ENCODE measurements at regions of chr19 and their contacts with region 1.

Region 1: DNA sequence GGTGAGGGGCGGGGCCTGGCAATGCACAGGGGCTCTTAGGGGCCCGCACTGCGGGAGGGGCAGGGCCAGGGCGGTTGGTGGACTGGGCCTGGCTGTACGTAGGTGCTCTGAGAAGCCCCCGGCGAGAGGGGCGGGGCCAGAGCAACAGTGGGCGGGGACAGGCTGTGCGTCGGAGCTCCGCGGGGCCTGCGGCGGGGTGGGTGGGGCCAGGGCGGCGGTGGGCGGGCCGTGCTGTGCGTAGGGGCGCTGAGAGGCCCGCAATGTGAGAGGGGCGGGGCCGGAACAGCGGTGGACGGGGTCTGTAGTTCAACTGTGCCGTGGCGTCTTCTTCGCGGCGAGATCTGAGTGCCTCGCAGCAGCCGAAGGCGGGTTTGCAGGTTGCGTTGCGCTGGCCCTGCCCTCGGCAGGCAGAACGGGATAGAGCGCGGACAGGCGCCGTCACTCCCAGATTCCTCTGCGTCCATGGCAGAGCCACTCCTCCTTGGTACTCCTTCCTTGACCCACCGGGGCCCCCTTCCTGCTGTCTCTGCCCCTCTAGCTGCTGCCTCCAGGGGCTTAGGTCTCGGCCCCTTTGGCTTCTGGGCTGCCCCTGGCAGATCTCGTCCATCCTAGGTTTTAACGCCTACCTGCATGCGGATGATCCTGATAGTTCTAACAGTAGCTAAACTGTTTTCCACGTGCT is 33.2 kb downstream of the CCNE1 start:
- DNase-seq: peak; percentile 94 to 99 (median 96)
- ATAC-seq: peak; percentile 80
- H3K4me3 ChIP-seq: peak overlapping the region; percentile 99
- H3K4me3 Mint-ChIP-seq: peak overlapping the region; percentile 95
- H3K27ac ChIP-seq: peak overlapping the region; percentile 76
- H3K27ac Mint-ChIP-seq: peak overlapping the region; percentile 93
- H3K4me1 ChIP-seq: peaks cover 24% of the 10 kb centered on the region
- H3K4me1 Mint-ChIP-seq: peaks cover 22% of the 10 kb centered on the region
- H3K27me3 ChIP-seq: no peaks in the 10 kb centered on the region
- H3K27me3 Mint-ChIP-seq: no peaks in the 10 kb centered on the region
- CTCF ChIP-seq: no peak

Region 2: DNA sequence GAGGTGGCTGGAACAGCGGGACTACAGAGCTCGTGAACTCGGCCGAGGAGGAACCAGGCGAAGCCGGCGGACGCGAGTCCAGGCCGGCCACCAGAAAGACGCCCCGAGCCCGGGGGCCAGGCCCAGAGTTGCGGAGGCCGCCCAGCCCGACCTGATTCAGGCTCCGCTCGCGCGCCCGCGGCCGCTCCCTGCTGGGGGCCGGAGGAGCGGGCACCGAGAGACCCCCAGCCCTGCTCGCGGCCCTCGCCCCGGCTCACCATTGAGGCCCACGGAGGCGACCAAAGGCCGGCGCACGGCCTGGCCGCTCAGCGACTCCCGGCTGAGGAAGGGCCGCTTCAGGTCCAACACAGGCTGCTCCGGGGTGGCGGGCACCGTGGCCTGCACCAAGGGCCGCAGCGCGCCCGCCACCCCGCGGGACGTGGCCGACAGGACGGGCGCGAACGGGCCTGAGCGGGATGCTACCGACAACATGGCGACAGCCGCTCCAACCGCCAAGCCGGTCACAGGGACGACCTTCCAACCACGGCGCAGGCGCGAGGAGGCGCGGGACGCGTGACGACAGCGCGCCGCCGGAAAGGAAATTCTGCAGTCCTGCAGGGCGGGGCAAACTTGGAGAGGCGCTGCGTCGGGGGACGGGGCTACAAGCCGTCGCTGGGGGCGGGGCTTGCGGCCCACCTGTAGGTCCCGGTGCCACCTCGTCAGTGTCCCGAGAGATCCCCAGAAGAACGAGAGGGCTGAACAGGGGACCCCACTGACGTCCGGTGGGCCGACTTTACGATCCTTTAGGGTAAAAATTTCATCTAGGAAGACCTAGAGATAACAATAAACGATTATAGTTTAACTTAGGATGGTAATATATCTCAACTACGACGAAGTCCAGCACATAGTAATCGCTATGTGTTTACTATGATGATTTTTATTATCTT is 632.1 kb before region 1 on chr19 and contains the start of gene UQCRFS1:
- CTCF ChIA-PET with region 1: no interaction called
- POLR2A ChIA-PET with region 1: no interaction called
- intact Hi-C with region 1: loop called in 1 of 2 experiments (anchors 10 kb)
- DNase-seq: peak; percentile 91 to 97 (median 94)
- ATAC-seq: peak; percentile 96
- H3K4me3 ChIP-seq: peak within 1 kb of the TSS; percentile 74
- H3K4me3 Mint-ChIP-seq: peak within 1 kb of the TSS; percentile 99
- H3K27ac ChIP-seq: peak within 1 kb of the TSS; percentile 67 to 78
- H3K27ac Mint-ChIP-seq: peak within 1 kb of the TSS; percentile 96
- H3K4me1 ChIP-seq: peaks cover 10% of the 10 kb centered on the region
- H3K4me1 Mint-ChIP-seq: peaks cover 54% of the 10 kb centered on the region
- H3K27me3 ChIP-seq: no peaks in the 10 kb centered on the region
- H3K27me3 Mint-ChIP-seq: peaks cover 14% of the 10 kb centered on the region
- CTCF ChIP-seq: no peak
- total RNA-seq, gene UQCRFS1: 30.5 TPM

Region 3: GRCh38 chr19:29658221-29658991 is 186.6 kb before region 1 on chr19:
- CTCF ChIA-PET with region 1: no interaction called
- POLR2A ChIA-PET with region 1: no interaction called
- intact Hi-C with region 1: no loop called
- DNase-seq: peak in 1 of 14 experiments; percentile 2
- ATAC-seq: no peak
- H3K4me3 ChIP-seq: no peak overlapping the region
- H3K4me3 Mint-ChIP-seq: no peak overlapping the region
- H3K27ac ChIP-seq: no peak overlapping the region
- H3K27ac Mint-ChIP-seq: no peak overlapping the region
- H3K4me1 ChIP-seq: peaks cover 20% of the 10 kb centered on the region
- H3K4me1 Mint-ChIP-seq: peaks cover 30% of the 10 kb centered on the region
- H3K27me3 ChIP-seq: no peaks in the 10 kb centered on the region
- H3K27me3 Mint-ChIP-seq: no peaks in the 10 kb centered on the region
- CTCF ChIP-seq: no peak

Region 4: GRCh38 chr19:29671393-29672160 is 173.5 kb before region 1 on chr19:
- CTCF ChIA-PET with region 1: no interaction called
- POLR2A ChIA-PET with region 1: interaction called, 5 read pairs
- intact Hi-C with region 1: loop called in 1 of 2 experiments (anchors 5 kb)
- DNase-seq: peak; percentile 73 to 94 (median 89)
- ATAC-seq: peak; percentile 63
- H3K4me3 ChIP-seq: peak overlapping the region; percentile 30
- H3K4me3 Mint-ChIP-seq: peak overlapping the region; percentile 68
- H3K27ac ChIP-seq: peak overlapping the region; percentile 78 to 86
- H3K27ac Mint-ChIP-seq: peak overlapping the region; percentile 98
- H3K4me1 ChIP-seq: peaks cover 98% of the 10 kb centered on the region
- H3K4me1 Mint-ChIP-seq: peaks cover 88% of the 10 kb centered on the region
- H3K27me3 ChIP-seq: no peaks in the 10 kb centered on the region
- H3K27me3 Mint-ChIP-seq: no peaks in the 10 kb centered on the region
- CTCF ChIP-seq: peak; percentile 56

Region 5: GRCh38 chr19:29760752-29761502 is 84.1 kb before region 1 on chr19:
- CTCF ChIA-PET with region 1: interaction called, 6 read pairs
- POLR2A ChIA-PET with region 1: interaction called, 5 read pairs
- intact Hi-C with region 1: loop called in 1 of 2 experiments (anchors 1 kb)
- DNase-seq: no peak
- ATAC-seq: no peak
- H3K4me3 ChIP-seq: no peak overlapping the region
- H3K4me3 Mint-ChIP-seq: no peak overlapping the region
- H3K27ac ChIP-seq: no peak overlapping the region
- H3K27ac Mint-ChIP-seq: no peak overlapping the region
- H3K4me1 ChIP-seq: peaks cover 9% of the 10 kb centered on the region
- H3K4me1 Mint-ChIP-seq: no peaks in the 10 kb centered on the region
- H3K27me3 ChIP-seq: peaks cover 0 to 3% of the 10 kb centered on the region in 2 experiments
- H3K27me3 Mint-ChIP-seq: no peaks in the 10 kb centered on the region
- CTCF ChIP-seq: no peak

Region 6: DNA sequence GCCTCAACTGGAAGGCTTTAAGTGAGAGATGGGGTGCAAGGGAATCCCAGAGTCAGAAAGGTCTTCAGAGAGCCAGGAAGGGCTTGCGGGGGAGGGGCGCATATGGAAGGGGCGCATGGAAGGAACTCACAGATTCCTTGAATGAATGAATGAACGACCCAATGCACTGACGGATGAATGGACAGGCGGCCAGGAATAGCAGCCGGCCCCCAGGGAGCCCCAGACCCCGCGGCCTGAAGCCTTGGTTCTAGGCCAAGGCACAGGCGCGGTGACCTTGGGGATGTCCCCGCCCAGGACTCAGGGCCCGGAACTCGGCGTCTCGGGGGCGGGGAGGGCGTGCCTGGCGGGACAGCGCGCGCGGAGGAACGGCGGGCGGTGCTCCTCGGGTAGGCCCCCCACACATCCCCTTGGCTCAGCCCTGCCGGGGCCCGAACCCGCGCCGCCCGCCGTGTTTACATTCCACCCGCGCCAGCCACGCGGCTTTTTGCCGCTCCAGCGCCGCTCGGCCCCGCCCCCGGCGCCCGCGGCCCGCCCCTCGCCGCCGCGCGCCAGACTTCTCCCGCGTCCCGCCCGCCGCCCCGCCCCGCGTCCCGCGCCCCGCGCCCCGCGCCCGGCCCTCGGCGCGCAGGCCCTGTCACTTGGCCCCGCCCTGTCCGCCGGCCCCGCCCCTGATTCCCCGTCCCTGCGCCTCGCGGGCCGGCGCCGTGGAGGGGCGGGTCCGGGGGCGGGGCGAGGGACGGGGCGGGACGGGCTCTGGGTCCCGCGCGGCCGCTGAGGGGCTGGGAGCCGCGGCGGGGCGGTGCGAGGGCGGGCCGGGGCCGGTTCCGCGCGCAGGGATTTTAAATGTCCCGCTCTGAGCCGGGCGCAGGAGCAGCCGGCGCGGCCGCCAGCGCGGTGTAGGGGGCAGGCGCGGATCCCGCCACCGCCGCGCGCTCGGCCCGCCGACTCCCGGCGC is 33.6 kb before region 1 on chr19 and contains the start of gene CCNE1:
- CTCF ChIA-PET with region 1: no interaction called
- POLR2A ChIA-PET with region 1: interaction called, 17 read pairs
- intact Hi-C with region 1: loop called (anchors 1 kb)
- DNase-seq: peak; percentile 88 to 100 (median 94)
- ATAC-seq: peak; percentile 90
- H3K4me3 ChIP-seq: peak within 1 kb of the TSS; percentile 58
- H3K4me3 Mint-ChIP-seq: peak within 1 kb of the TSS; percentile 96
- H3K27ac ChIP-seq: peak within 1 kb of the TSS; percentile 50 to 55
- H3K27ac Mint-ChIP-seq: peak within 1 kb of the TSS; percentile 82
- H3K4me1 ChIP-seq: peaks cover 14% of the 10 kb centered on the region
- H3K4me1 Mint-ChIP-seq: peaks cover 11% of the 10 kb centered on the region
- H3K27me3 ChIP-seq: no peaks in the 10 kb centered on the region
- H3K27me3 Mint-ChIP-seq: no peaks in the 10 kb centered on the region
- CTCF ChIP-seq: no peak
- total RNA-seq, gene CCNE1: 4.9 to 5.6 TPM

Region 7: GRCh38 chr19:29831041-29831548 is 13.9 kb before region 1 on chr19:
- CTCF ChIA-PET with region 1: no interaction called
- POLR2A ChIA-PET with region 1: interaction called, 52 read pairs
- intact Hi-C with region 1: loop called in 1 of 2 experiments (anchors 1 kb)
- DNase-seq: peak; percentile 45 to 87 (median 62)
- ATAC-seq: peak; percentile 98
- H3K4me3 ChIP-seq: peak overlapping the region; percentile 15
- H3K4me3 Mint-ChIP-seq: peak overlapping the region; percentile 72
- H3K27ac ChIP-seq: peak overlapping the region; percentile 56 to 59
- H3K27ac Mint-ChIP-seq: peak overlapping the region; percentile 93
- H3K4me1 ChIP-seq: peaks cover 37% of the 10 kb centered on the region
- H3K4me1 Mint-ChIP-seq: peaks cover 45% of the 10 kb centered on the region
- H3K27me3 ChIP-seq: no peaks in the 10 kb centered on the region
- H3K27me3 Mint-ChIP-seq: no peaks in the 10 kb centered on the region
- CTCF ChIP-seq: no peak

Region 8: DNA sequence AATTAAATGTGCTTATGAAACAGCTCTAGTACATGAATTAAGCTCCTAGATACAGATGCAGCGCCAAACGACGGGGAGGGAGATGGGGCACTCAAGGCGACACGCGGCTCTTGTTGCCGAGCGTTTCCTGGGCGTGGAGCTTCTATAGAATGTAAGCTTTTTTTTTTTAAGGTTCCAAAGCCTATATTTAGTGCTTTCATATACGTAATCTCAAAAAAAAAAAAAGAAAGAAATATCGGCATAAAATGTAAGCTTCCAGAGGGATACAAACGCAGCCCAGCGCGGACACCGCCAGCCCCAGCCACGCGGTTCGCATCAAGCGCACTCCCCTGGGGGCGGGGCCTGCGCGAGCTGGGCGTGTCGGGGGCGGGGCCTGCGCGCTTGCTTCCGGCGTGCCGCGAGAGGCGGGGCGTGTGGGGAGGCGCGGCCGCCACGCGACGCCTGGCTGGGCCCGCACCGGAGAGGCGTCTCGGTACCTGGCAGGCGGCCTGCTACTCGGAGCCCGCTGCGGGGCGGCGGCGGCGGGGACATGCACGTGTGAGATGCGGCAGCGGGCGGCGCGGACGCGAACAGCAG is 96.9 kb after region 1 on chr19 and contains the start of gene URI1:
- CTCF ChIA-PET with region 1: interaction called, 4 read pairs
- POLR2A ChIA-PET with region 1: interaction called, 26 read pairs
- intact Hi-C with region 1: loop called (anchors 2 to 10 kb)
- DNase-seq: peak; percentile 81 to 98 (median 93)
- ATAC-seq: peak; percentile 89
- H3K4me3 ChIP-seq: peak within 1 kb of the TSS; percentile 82
- H3K4me3 Mint-ChIP-seq: peak within 1 kb of the TSS; percentile 98
- H3K27ac ChIP-seq: peak within 1 kb of the TSS; percentile 12 to 67
- H3K27ac Mint-ChIP-seq: peak within 1 kb of the TSS; percentile 96
- H3K4me1 ChIP-seq: peaks cover 27% of the 10 kb centered on the region
- H3K4me1 Mint-ChIP-seq: peaks cover 53% of the 10 kb centered on the region
- H3K27me3 ChIP-seq: no peaks in the 10 kb centered on the region
- H3K27me3 Mint-ChIP-seq: no peaks in the 10 kb centered on the region
- CTCF ChIP-seq: no peak
- total RNA-seq, gene URI1: 50.9 to 63.6 TPM

Measured in CD4-positive, alpha-beta T cell (primary cell).